Activated T-helper 1 cell treated with anti-CD3 and anti-CD28 coated beads, Interleukin-12 subunit alpha, Interleukin-12 subunit beta, Interleukin-2, Interleukin-4 antibody, amounts not matched to agents 30 ng/mL and 10 ng/mL and 1 ng/mL, durations not matched to agents 14 hours and 24 hours and 36 hours (primary cell): ENCODE measurements at regions of chr4 and their contacts with region 1.

Region 1: DNA sequence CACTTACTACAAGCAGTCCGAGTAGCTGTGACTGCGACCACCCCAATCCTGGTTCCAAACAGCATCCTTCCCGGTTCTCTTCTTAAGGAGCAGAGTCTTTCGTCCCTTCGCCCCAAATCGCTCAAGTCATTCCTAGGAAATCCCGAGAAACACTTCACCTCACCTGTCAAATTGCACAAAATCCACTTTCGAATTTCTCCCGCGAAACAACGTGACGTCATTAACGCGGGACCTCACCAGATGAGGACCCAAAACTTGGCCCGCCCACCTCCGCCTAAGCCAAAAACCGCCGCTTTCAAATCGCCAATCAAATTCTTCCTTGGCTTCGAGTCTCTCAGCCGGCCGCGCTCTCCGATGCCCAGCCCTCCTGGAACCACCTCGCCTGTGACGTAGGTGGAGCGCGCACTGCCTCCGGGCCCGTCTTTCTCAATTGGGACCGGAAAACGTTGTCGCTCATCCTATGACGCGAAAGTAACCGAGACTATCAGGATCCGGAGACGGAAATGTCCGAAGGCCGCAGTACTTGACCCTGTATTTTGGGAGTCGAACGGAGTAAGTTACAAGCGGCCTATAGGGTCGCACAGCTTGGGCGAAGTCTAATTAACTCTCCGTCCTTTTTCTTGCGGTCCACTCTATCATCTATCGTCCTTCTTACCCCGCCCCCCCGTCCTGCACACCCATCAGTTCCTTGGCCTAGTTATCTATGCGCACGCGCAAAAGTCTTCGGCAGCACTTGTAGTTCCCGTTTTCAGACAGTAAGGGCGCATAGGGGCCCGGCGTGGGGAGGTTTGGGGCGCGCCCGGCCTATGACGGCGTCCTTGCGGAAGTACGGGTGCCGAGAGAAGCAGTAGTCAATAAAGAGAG is at the starts of genes LARP7 and ZGRF1:
- DNase-seq: peak; percentile 97
- H3K4me3 Mint-ChIP-seq: no peak within 1 kb of the TSS
- H3K27ac Mint-ChIP-seq: peak within 1 kb of the TSS; percentile 61
- H3K4me1 Mint-ChIP-seq: peaks cover 16% of the 10 kb centered on the region
- H3K27me3 Mint-ChIP-seq: no peaks in the 10 kb centered on the region
- total RNA-seq, gene LARP7: 45.3 and 46.1 TPM in 2 replicates
- total RNA-seq, gene ZGRF1: 31.0 and 33.1 TPM in 2 replicates

Region 2: DNA sequence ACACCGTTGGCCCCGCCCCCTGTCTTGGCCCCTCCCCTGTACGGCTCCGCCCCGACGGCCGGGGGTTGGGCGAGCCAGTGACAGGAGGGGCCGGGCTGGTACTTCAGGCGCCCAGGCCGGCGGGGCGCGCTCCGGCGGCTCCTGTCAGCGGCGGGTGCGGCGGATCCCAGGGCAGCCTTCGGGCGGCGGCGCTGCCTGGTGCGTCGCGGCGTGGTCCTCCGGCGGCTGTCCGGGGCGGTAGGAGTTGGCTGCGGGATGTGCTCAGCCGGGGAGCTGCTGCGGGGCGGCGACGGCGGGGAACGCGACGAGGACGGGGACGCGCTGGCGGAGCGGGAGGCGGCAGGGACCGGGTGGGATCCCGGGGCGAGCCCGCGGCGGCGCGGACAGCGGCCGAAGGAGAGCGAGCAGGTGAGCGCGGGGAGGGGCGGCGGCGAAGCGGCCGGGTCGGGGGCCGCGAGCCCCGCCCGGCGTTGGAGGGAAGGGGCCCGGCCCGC is 491.5 kb before region 1 on chr4 and contains the start of gene FAM241A:
- intact Hi-C with region 1: loop called (anchors 1 kb)
- DNase-seq: peak; percentile 80
- H3K4me3 Mint-ChIP-seq: peak within 1 kb of the TSS; percentile 98
- H3K27ac Mint-ChIP-seq: peak within 1 kb of the TSS; percentile 97
- H3K4me1 Mint-ChIP-seq: peaks cover 47% of the 10 kb centered on the region
- H3K27me3 Mint-ChIP-seq: no peaks in the 10 kb centered on the region
- total RNA-seq, gene FAM241A: 6.7 and 7.1 TPM in 2 replicates

Region 3: GRCh38 chr4:112327965-112328733 is 308.8 kb before region 1 on chr4:
- intact Hi-C with region 1: loop called (anchors 1 kb)
- DNase-seq: no peak
- H3K4me3 Mint-ChIP-seq: no peak overlapping the region
- H3K27ac Mint-ChIP-seq: no peak overlapping the region
- H3K4me1 Mint-ChIP-seq: peaks cover 8% of the 10 kb centered on the region
- H3K27me3 Mint-ChIP-seq: no peaks in the 10 kb centered on the region

Region 4: DNA sequence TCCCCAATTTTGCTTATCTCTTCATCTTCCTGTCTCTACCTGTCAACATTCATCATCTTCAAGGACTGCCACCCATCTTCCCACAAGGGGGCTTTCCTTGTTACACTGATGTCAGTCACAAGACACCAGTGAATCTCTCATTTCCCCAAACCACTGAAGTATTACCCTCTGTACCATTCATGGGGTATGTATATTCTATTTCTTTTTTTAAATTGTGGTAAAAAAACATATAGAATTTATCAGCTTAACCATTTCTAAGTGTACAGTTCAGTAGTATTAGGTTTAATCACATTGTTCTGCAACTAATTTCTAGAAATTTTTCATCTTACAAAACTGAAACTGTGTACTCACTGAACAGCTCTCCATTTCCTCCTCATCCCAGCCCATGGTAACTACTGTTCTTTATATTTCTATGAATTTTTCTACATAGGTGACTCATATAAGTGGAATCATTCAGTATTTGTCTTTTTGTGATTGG is 98.6 kb after region 1 on chr4:
- intact Hi-C with region 1: loop called (anchors 1 kb)
- DNase-seq: no peak
- H3K4me3 Mint-ChIP-seq: no peak overlapping the region
- H3K27ac Mint-ChIP-seq: peak overlapping the region; percentile 34
- H3K4me1 Mint-ChIP-seq: peaks cover 23% of the 10 kb centered on the region
- H3K27me3 Mint-ChIP-seq: no peaks in the 10 kb centered on the region

Region 5: GRCh38 chr4:112938461-112939058 is 301.6 kb after region 1 on chr4:
- intact Hi-C with region 1: loop called (anchors 1 kb)
- DNase-seq: no peak
- H3K4me3 Mint-ChIP-seq: no peak overlapping the region
- H3K27ac Mint-ChIP-seq: no peak overlapping the region
- H3K4me1 Mint-ChIP-seq: no peaks in the 10 kb centered on the region
- H3K27me3 Mint-ChIP-seq: no peaks in the 10 kb centered on the region